ENCODE measurements at regions of chr7 and their contacts with region 1.

Region 1: GRCh38 chr7:131107337-131108211 is 220.1 kb upstream of the MKLN1 start:
- DNase-seq: peak; percentile 75
- H3K4me3 Mint-ChIP-seq: peak overlapping the region; percentile 98
- H3K27ac Mint-ChIP-seq: peak overlapping the region; percentile 97
- H3K4me1 Mint-ChIP-seq: peaks cover 54% of the 10 kb centered on the region
- H3K27me3 Mint-ChIP-seq: no peaks in the 10 kb centered on the region

Region 2: GRCh38 chr7:131007394-131008330 is 99.9 kb before region 1 on chr7:
- intact Hi-C with region 1: loop called (anchors 1 kb)
- DNase-seq: peak; percentile 57
- H3K4me3 Mint-ChIP-seq: peak overlapping the region; percentile 67
- H3K27ac Mint-ChIP-seq: peak overlapping the region; percentile 95
- H3K4me1 Mint-ChIP-seq: peaks cover 61% of the 10 kb centered on the region
- H3K27me3 Mint-ChIP-seq: no peaks in the 10 kb centered on the region

Region 3: GRCh38 chr7:131188367-131189339 is 81.1 kb after region 1 on chr7:
- intact Hi-C with region 1: loop called (anchors 1 kb)
- DNase-seq: peak; percentile 56
- H3K4me3 Mint-ChIP-seq: peak overlapping the region; percentile 42
- H3K27ac Mint-ChIP-seq: peak overlapping the region; percentile 89
- H3K4me1 Mint-ChIP-seq: peaks cover 59% of the 10 kb centered on the region
- H3K27me3 Mint-ChIP-seq: no peaks in the 10 kb centered on the region

Region 4: DNA sequence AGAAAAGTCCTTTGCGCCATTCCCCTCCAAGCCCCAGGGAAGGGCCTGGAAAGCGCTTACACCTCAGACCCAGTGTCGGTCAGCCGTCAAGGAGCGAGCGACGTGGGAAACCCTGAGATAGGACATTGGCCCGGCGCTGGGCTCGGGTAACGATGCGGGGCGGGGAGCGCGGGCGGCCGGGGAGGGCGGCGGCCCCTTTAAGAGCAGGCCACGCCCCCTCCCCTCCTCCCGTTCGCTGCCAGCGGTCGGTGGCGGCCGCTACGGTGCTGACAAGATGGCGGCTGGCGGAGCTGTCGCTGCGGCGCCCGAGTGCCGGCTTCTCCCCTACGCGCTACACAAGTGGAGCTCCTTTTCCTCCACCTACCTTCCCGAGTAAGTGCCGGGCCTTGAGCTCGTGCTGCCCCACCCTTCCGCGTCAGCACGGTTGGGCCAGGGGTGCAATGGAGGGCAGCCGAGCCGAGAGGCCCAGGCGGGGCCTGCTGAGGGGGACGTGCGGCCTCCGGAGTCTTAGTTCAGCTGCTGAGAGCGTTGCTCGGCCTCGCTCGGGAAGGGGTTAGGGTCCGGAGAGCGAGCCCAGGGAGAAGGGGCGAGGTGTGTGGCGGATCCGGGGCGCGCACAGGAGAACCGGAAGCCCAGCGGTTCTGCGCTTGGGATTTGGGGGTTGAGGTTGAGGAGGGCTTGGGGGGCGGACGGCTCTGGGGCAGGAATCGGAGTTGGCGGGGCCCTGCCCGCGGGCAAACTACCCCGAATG is 220.2 kb after region 1 on chr7 and contains the start of gene MKLN1:
- intact Hi-C with region 1: loop called (anchors 1 kb)
- DNase-seq: peak; percentile 85
- H3K4me3 Mint-ChIP-seq: peak within 1 kb of the TSS; percentile 94
- H3K27ac Mint-ChIP-seq: peak within 1 kb of the TSS; percentile 95
- H3K4me1 Mint-ChIP-seq: peaks cover 48% of the 10 kb centered on the region
- H3K27me3 Mint-ChIP-seq: no peaks in the 10 kb centered on the region
- total RNA-seq, gene MKLN1: 38.3 and 40.9 TPM in 2 replicates

Region 5: DNA sequence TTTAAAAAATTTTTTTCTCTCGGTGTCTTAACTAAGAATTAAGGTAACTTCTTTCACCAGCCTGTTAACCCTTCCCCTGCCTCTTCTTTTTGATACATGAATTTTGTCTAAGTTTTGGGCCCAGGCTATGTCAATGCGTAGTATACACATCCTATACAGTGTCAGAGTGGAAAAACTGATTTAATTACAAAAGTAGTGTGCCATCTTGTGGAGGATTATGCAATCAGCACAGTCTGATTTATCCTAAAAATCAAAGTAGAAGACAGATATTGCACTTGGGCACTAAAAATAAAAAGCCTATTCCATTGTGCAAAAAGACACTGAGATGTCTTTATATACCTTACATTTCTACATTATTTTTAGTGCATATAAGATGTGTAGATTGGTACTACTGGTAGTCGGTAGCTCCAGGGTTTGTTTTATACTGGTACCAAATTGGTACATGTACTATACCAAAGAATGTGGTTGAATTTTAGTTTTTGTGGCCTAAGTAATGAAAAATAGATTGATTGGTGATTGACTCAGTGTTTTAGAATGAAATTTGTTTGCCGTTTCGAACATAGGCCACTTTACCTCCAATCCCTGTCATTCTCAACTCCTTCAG is 316.7 kb after region 1 on chr7:
- intact Hi-C with region 1: loop called (anchors 1 kb)
- DNase-seq: no peak
- H3K4me3 Mint-ChIP-seq: no peak overlapping the region
- H3K27ac Mint-ChIP-seq: no peak overlapping the region
- H3K4me1 Mint-ChIP-seq: peaks cover 5% of the 10 kb centered on the region
- H3K27me3 Mint-ChIP-seq: no peaks in the 10 kb centered on the region